ENCODE measurements at regions of chr12 and their contacts with region 1.

Region 1: DNA sequence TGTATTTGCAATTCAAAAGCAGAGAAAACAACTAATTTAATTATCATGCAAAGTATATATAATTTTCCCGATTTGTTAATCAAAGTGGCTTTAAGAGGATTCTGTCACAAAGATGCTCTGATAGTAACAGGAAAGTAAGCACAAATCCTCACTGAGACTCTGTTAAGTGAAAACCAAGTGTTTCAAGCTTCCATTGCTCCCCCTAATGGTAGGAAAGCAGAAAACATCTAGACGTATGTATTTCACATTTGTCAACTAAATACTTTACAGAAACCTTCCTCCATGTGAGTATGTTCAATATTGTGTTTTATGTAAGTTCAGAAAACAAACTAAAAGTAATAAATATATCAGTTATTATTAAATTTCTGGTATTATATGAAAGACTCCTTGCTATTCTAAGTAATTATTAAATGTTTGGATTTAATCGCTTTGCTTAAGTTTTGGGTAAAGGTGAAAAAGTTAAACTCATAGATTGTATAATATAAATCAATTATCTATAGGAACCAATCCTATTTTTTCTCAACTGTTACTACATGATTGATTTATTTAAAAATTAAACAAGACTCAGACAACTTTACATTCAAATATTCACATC is 1.5 kb upstream of the NTS start:
- DNase-seq: no peak
- ATAC-seq: peak; percentile 46 to 81 (median 78)
- H3K4me3 ChIP-seq: no peak overlapping the region
- H3K27ac ChIP-seq: no peak overlapping the region
- H3K4me1 ChIP-seq: no peaks in the 10 kb centered on the region
- H3K27me3 ChIP-seq: peaks cover 0 to 6% (median 0%) of the 10 kb centered on the region in 4 donors
- CTCF ChIP-seq: peak in 3 of 4 donors; percentile 10 to 53 (median 53)

Region 2: GRCh38 chr12:85468356-85469157 is 404.0 kb before region 1 on chr12:
- intact Hi-C with region 1: loop called in 1 of 3 experiments (anchors 5 kb)
- DNase-seq: peak in 4 of 6 donors; percentile 29 to 62 (median 45)
- ATAC-seq: peak; percentile 85 to 99 (median 96)
- H3K4me3 ChIP-seq: peak overlapping the region in 3 of 4 donors; percentile 10 to 47 (median 30)
- H3K27ac ChIP-seq: no peak overlapping the region
- H3K4me1 ChIP-seq: no peaks in the 10 kb centered on the region
- H3K27me3 ChIP-seq: no peaks in the 10 kb centered on the region
- CTCF ChIP-seq: peak; percentile 43 to 61 (median 54)

Region 3: GRCh38 chr12:85688837-85689236 is 183.8 kb before region 1 on chr12:
- intact Hi-C with region 1: no loop called
- DNase-seq: no peak
- ATAC-seq: peak; percentile 34 to 77 (median 68)
- H3K4me3 ChIP-seq: no peak overlapping the region
- H3K27ac ChIP-seq: peak overlapping the region in 1 of 4 donors; percentile 34
- H3K4me1 ChIP-seq: no peaks in the 10 kb centered on the region
- H3K27me3 ChIP-seq: no peaks in the 10 kb centered on the region
- CTCF ChIP-seq: no peak

Region 4: GRCh38 chr12:85947286-85947685 is 74.7 kb after region 1 on chr12:
- intact Hi-C with region 1: no loop called
- DNase-seq: no peak
- ATAC-seq: no peak
- H3K4me3 ChIP-seq: no peak overlapping the region
- H3K27ac ChIP-seq: no peak overlapping the region
- H3K4me1 ChIP-seq: no peaks in the 10 kb centered on the region
- H3K27me3 ChIP-seq: no peaks in the 10 kb centered on the region
- CTCF ChIP-seq: no peak